Thyroid gland (tissue), 4 donors: ENCODE measurements at regions of chr11 and their contacts with region 1.

Region 1: GRCh38 chr11:2526808-2527381 is 82.1 kb downstream of the KCNQ1 start:
- DNase-seq: peak; percentile 71 to 74
- H3K4me3 ChIP-seq: peak overlapping the region in 2 of 3 donors; percentile 3 to 9
- H3K27ac ChIP-seq: peak overlapping the region; percentile 83 to 96 (median 93)
- H3K4me1 ChIP-seq: peaks cover 52 to 68% of the 10 kb centered on the region in 2 donors
- H3K27me3 ChIP-seq: no peaks in the 10 kb centered on the region
- CTCF ChIP-seq: peak in 5 of 6 experiments; percentile 12 to 47 (median 41)
- POLR2A ChIP-seq: no peak

Region 2: DNA sequence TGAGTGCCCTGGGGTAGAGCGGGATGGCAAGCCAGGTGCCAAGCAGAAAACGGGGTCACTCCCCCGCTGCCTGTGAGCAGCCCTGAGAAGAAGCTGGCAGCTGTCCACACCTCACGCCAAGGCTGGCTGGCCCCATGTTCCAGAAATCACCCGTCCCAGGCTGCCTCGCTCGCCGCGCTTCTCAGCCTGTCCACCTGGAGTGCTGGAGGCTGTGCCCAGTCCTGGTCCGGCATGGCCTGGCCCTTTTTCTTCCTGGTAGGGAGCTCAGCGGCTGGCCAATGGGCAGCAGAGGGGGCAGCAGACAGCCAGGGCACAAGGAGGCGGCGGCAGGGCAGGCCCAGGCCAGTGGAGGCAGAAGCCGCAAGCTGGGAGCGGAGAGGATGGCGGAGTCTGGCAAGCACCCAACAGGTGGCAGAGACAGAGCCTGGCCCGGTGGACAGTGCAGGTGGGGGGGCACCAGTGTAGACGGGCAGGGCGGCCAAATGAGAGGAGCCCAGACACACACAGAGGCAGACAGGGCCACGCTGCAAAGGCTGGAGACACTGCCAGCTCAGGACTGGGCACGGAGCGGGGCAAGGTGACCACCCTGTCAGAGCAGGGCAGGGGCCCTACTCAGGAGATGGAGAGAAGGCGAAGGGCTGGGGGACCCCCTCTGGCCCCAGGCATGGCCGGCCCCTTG is 318.1 kb before region 1 on chr11:
- intact Hi-C with region 1: loop called (anchors 10 kb)
- DNase-seq: peak; percentile 95 to 96
- H3K4me3 ChIP-seq: no peak overlapping the region
- H3K27ac ChIP-seq: peak overlapping the region; percentile 19 to 36 (median 32)
- H3K4me1 ChIP-seq: peaks cover 10 to 15% of the 10 kb centered on the region in 2 donors
- H3K27me3 ChIP-seq: no peaks in the 10 kb centered on the region
- CTCF ChIP-seq: peak in 5 of 6 experiments; percentile 44 to 74 (median 59)
- POLR2A ChIP-seq: no peak

Region 3: GRCh38 chr11:2298795-2299761 is 227.8 kb before region 1 on chr11:
- intact Hi-C with region 1: loop called (anchors 5 kb)
- DNase-seq: peak; percentile 69 to 70
- H3K4me3 ChIP-seq: no peak overlapping the region
- H3K27ac ChIP-seq: no peak overlapping the region
- H3K4me1 ChIP-seq: peaks cover 7 to 12% of the 10 kb centered on the region in 2 donors
- H3K27me3 ChIP-seq: no peaks in the 10 kb centered on the region
- CTCF ChIP-seq: peak; percentile 15 to 86 (median 70)
- POLR2A ChIP-seq: no peak

Region 4: GRCh38 chr11:2330696-2331095 is 196.2 kb before region 1 on chr11:
- intact Hi-C with region 1: no loop called
- DNase-seq: no peak
- H3K4me3 ChIP-seq: no peak overlapping the region
- H3K27ac ChIP-seq: no peak overlapping the region
- H3K4me1 ChIP-seq: no peaks in the 10 kb centered on the region
- H3K27me3 ChIP-seq: no peaks in the 10 kb centered on the region
- CTCF ChIP-seq: no peak
- POLR2A ChIP-seq: no peak

Region 5: DNA sequence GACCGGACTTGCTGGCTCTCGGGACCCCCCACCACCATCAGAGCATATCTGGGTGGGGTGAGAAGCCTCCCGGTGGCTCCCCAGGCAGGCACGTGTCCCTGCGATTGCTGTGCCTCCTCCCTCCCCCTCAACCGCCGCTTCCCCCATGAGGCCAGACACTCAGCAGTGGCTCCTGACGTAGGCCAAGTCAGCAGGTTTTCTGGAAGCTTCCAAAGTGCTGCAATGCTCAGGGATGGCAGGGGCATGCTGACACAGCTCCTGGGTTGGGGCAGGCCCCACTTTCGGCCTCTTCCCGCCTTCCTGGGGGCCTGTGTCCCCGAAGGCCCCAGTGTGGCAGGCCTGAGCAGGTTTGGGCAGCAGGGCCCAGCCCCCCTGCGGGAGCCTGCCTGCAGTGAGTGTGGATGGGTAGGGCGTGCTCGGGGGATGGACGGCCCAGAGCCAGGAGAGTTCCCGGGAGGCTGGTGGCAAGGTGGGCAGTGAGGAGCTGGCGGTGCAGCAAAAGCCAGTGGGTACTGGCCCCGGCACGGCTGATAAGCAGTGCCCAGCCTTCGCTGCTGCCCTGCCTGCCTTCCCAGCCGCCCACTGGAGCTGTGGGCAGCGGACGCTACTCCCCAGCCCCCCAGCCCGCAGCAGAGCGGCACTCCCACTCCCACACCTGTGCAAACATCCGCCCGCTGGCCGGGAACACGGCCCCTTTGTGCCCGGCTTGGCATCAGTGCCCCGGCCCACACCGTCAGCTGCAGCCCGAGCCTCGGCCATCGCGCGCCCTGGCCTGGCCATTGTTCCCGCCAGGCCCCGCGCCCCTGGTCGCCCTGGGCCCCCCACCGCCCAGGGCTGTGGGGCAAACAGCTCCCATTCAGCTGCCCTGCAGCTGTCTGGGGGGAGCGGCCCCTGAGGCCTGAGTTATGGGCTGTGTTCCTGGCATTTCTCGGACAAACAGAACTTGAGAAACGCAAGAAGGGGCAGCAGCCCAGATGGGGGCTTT is 47.9 kb after region 1 on chr11:
- intact Hi-C with region 1: no loop called
- DNase-seq: peak in 1 of 2 donors; percentile 1
- H3K4me3 ChIP-seq: no peak overlapping the region
- H3K27ac ChIP-seq: no peak overlapping the region
- H3K4me1 ChIP-seq: no peaks in the 10 kb centered on the region
- H3K27me3 ChIP-seq: no peaks in the 10 kb centered on the region
- CTCF ChIP-seq: no peak
- POLR2A ChIP-seq: no peak